Adrenal gland (tissue), 19 donors: ENCODE measurements at regions of chr19 and their contacts with region 1.

Region 1: GRCh38 chr19:1113033-1113985 is 9.5 kb downstream of the GPX4 start:
- DNase-seq: peak; percentile 97 to 99 (median 98)
- H3K4me3 ChIP-seq: no peak overlapping the region
- H3K27ac ChIP-seq: peak overlapping the region; percentile 61 to 96 (median 84)
- H3K4me1 ChIP-seq: peaks cover 31 to 32% of the 10 kb centered on the region in 2 donors
- H3K27me3 ChIP-seq: no peaks in the 10 kb centered on the region
- CTCF ChIP-seq: peak; percentile 78 to 95 (median 91)
- POLR2A ChIP-seq: peak in 1 of 2 donors; percentile 51

Region 2: GRCh38 chr19:1189419-1189818 is 76.1 kb after region 1 on chr19:
- intact Hi-C with region 1: loop called in 1 of 2 experiments (anchors 5 kb)
- DNase-seq: no peak
- H3K4me3 ChIP-seq: no peak overlapping the region
- H3K27ac ChIP-seq: no peak overlapping the region
- H3K4me1 ChIP-seq: no peaks in the 10 kb centered on the region
- H3K27me3 ChIP-seq: no peaks in the 10 kb centered on the region
- CTCF ChIP-seq: no peak
- POLR2A ChIP-seq: no peak